AG04449 (cell line): ENCODE measurements at regions of chr5 and their contacts with region 1.

Region 1: GRCh38 chr5:17189381-17190036 is 27.9 kb upstream of the BASP1 start:
- DNase-seq: no peak
- H3K4me3 ChIP-seq: no peak overlapping the region
- CTCF ChIP-seq: peak; percentile 66

Region 2: DNA sequence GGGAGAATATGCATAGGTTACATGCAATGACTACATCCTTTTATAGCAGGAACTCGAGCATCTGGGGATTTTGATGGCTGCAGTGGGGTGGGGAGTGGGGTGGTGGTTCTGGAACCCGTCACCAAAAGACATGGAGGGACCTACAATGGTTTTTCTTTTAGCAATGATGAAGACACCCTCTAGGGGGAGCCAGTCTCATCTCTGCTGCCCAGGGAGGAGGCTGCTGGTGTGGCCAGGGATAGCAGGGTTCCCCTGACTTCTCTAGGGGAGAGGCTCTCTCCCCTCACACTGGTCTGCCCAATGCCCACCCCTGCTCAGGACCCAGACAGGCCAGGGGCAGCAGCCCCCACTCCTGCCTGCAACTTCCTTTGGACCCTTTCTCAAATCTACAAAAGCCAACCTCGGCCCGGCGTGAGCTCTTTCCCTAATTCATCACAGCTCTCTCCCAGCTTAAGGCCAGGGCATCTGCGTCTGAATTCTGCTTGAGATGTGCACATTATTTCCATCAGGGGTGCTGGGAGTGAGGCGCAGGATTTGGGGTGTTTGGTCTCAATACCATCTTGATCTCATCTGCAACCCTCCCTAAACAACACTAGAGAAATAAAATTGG is 499.2 kb before region 1 on chr5:
- CTCF ChIA-PET with region 1: interaction called, 42 read pairs
- POLR2A ChIA-PET with region 1: no interaction called
- DNase-seq: no peak
- H3K4me3 ChIP-seq: no peak overlapping the region
- CTCF ChIP-seq: peak; percentile 83

Region 3: DNA sequence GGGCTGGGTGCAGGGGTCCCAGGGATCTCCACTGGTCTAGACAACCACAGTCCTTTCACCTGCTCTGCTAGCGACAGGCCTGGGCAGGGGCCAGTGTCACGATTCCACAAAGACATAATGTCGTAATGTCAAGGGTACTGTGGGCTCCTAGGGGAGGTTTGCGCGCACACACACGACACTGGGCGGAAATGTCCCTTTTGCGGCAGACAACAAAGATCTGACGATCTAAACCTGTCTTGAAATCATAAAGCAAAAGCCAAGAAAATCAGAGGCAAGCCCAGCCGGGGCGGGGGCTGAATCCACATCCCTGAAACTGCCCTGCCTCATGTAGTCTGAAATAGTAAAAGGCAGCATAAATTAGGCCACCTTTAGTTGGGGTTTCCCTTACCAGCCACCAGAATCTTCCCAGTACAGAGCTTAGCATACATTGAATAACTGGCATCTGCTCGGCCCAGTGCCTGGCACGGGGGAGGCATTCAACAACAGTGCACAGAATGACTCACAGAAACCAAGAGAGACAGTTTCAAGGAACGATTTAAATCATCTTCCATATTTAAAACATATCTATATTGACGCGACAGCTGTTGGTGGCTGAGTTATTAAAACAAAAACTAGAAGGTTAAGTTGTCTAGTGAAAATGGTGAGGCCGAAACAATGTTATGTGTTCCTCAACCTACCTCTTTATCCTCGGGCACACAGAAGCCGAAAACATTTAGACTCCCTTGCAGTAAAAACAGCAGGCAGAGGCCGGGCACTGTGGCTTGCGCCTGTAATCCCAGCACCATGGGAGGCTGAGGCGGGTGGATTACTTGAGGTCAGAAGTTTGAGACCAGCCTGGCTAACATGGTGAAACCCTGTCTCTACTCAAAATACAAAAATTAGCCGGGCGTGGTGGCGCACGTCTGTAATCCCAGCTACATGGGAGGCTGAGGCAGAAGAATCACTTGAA is 404.4 kb before region 1 on chr5:
- CTCF ChIA-PET with region 1: interaction called, 56 read pairs
- POLR2A ChIA-PET with region 1: no interaction called
- DNase-seq: no peak
- H3K4me3 ChIP-seq: no peak overlapping the region
- CTCF ChIP-seq: no peak

Region 4: DNA sequence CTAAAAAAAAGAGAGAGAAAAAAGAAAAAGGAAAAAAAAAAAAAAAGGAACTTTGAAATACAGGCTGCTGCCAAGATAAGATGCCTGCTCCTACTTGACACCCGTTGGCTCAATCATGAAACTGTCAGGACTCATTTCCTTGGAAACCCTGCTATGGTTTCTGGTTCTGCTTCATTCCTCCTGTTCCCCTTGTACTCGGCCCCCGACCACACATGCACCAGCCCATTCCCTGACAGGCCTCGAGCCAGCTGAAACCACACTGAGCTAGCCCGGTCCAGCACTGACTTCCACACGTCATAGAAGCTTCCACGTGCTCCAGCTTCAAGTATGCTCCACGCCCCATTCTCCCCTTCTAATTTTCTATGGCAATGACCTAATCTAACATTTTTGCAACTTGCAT is 346.6 kb before region 1 on chr5:
- CTCF ChIA-PET with region 1: interaction called, 12 read pairs
- POLR2A ChIA-PET with region 1: no interaction called
- DNase-seq: no peak
- H3K4me3 ChIP-seq: no peak overlapping the region
- CTCF ChIP-seq: no peak

Region 5: GRCh38 chr5:16902846-16903245 is 286.7 kb before region 1 on chr5:
- CTCF ChIA-PET with region 1: interaction called, 18 read pairs
- POLR2A ChIA-PET with region 1: no interaction called
- DNase-seq: no peak
- H3K4me3 ChIP-seq: no peak overlapping the region
- CTCF ChIP-seq: no peak

Region 6: GRCh38 chr5:16957304-16958196 is 232.0 kb before region 1 on chr5:
- CTCF ChIA-PET with region 1: interaction called, 10 read pairs
- POLR2A ChIA-PET with region 1: no interaction called
- DNase-seq: peak; percentile 82
- H3K4me3 ChIP-seq: no peak overlapping the region
- CTCF ChIP-seq: no peak

Region 7: DNA sequence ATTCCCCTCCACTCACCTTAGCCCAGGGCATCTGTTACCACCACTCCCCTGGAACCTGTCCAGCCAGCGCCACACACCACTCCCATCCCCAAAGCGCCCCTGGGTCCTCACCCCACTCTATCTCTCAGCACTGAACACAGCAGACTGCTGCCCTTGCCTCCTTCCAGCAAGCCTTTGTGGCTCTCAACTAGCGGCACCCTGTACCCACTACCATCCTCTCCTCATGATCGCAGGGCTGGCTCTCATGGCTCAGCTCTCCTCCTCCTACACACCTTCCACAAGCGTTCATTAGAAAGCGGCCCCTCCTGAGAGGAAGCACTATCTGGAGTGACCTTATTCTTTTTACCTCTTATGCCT is 14.6 kb after region 1 on chr5:
- CTCF ChIA-PET with region 1: interaction called, 32 read pairs
- POLR2A ChIA-PET with region 1: no interaction called
- DNase-seq: no peak
- H3K4me3 ChIP-seq: no peak overlapping the region
- CTCF ChIP-seq: no peak

Region 8: DNA sequence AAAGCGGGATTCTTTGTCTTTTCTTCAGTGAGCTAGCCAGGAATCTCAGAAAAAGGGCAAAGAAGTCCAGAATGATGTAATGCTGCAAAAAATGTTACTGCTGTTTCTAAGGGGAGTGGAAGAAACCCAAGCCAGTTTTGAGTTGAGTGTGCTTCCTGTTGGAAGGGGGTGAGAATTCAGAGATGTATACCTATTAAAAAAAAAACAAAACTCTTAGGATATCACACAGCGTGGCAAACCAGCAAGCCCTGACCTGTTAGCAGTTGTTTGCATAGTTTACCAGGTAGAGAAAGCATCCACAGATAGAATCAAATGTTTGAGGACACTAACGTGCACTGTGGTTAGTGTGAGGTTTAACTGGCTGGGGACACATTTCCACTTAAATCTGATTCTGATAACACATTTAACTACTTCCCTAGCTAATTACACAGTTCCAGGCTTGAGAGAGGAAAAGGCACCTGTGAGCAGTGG is 39.3 kb after region 1 on chr5:
- CTCF ChIA-PET with region 1: no interaction called
- POLR2A ChIA-PET with region 1: no interaction called
- DNase-seq: no peak
- H3K4me3 ChIP-seq: no peak overlapping the region
- CTCF ChIP-seq: no peak